Left cardiac atrium (tissue), 4 donors: ENCODE measurements at regions of chr3 and their contacts with region 1.

Region 1: GRCh38 chr3:125003369-125003853 is 52.4 kb downstream of the HEG1 start:
- DNase-seq: peak; percentile 69
- ATAC-seq: peak; percentile 83 to 90

Region 2: DNA sequence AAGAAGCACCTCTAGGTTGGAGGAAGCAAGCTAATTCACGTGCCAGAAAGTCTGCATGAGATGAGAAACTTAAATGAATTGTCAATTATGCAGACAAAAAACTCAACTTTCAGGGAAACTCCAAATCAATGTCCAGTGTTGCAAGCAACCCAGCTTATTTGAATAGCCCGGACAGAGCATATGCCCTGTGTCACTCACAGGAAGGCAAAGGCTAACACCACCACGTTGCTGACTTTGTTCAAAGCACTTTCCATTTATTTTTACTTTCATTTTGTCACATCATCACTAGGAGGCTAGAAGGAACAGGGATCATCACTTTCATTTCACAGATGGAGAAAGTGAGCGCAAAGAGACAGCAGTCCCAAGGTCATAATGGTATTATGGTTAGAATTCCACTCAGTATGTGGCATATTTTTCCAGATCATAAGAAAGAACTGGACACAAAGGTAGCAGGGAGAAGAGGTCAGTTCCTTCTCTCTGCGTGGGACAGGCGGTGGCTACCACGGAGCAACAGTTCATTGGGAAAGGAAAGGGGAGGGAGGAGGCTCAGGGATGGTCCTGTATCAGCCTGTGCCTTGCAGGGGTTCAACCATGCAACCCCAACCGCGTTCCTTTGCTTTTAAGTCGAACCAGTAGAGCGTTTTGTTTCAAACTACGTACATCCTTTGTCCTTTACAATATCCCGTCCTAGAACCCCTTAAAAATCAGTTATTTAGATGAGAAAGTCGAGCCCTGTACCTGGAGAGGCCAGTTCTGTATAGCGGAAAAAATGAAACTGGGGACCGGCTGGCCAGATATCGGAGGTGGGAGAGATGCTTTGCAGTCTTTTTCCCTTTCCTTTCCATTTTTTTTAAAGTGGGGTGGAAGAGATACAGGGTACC is 51.3 kb after region 1 on chr3:
- intact Hi-C with region 1: loop called (anchors 5 kb)
- DNase-seq: peak; percentile 18
- ATAC-seq: peak in 1 of 2 donors; percentile 4

Region 3: DNA sequence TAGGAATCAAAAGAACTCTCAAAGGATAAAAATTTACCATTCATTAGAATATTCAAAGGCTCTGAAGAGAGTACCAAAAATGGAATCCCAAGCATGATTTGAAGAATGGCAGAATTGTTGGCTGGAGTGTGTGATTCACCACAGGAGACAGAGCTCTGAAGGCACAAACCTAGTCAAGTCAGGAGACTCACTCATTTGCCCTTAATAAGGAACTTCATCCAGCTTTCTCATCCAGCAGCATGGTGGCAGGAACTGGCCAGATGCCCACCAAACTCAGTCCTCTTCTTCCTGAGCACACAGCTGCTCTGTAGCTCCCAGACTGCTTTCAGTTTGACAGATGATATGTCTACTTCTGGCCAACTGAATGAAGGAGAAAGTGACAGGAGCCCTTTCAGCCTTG is 68.9 kb after region 1 on chr3:
- intact Hi-C with region 1: no loop called
- DNase-seq: no peak
- ATAC-seq: peak in 1 of 2 donors; percentile 31